HEK293 (cell line): ENCODE measurements at regions of chr5 and their contacts with region 1.

Region 1: GRCh38 chr5:173925448-173926071 is 37.4 kb downstream of the CPEB4 start:
- H3K4me3 ChIP-seq: no peak overlapping the region
- H3K27ac ChIP-seq: no peak overlapping the region
- H3K4me1 ChIP-seq: peaks cover 31% of the 10 kb centered on the region
- CTCF ChIP-seq: 0 out of 2 replicates have a peak, but pooled peaks have one; percentile 24

Region 2: GRCh38 chr5:173915310-173916014 is 10.1 kb before region 1 on chr5:
- CTCF ChIA-PET with region 1: interaction called, 28 read pairs
- POLR2A ChIA-PET with region 1: no interaction called
- H3K4me3 ChIP-seq: no peak overlapping the region
- H3K27ac ChIP-seq: no peak overlapping the region
- H3K4me1 ChIP-seq: peaks cover 14% of the 10 kb centered on the region
- CTCF ChIP-seq: no peak

Region 3: GRCh38 chr5:173941758-173942401 is 16.3 kb after region 1 on chr5:
- CTCF ChIA-PET with region 1: interaction called, 43 read pairs
- POLR2A ChIA-PET with region 1: no interaction called
- H3K4me3 ChIP-seq: no peak overlapping the region
- H3K27ac ChIP-seq: no peak overlapping the region
- H3K4me1 ChIP-seq: peaks cover 21% of the 10 kb centered on the region; the same call in 1 of the 2 replicates
- CTCF ChIP-seq: no peak